Naive thymus-derived CD4-positive, alpha-beta T cell (primary cell): ENCODE measurements at regions of chr6 and their contacts with region 1.

Region 1: DNA sequence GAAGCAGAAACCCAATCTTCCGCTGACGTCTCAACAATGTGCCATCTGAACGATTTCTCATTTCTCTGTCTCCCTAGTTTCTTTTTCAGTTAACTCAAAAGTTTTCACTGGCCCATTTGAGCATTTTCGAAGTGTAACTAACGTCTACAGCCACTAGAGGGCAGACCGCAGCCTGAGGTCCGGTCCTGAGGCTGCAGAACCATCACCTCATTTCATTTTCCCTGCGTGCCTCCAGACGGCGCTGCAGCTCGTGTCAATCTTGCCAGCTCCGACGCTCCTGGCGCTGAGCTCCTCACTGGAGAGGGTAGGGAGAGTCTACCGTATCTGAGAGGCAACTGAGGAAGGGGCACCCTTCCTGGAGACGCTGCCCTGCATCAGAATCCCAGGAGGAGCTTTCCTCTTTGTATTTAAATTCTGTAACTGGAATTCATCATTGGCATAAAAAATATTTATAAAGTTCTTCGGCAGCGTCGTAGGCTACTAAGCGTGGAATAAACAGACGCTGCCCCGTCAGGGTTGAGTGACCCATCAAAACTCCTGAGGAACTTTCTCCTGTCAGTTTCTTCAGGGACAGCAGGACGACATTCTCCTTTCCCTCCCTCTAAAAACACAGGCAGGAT is 28.5 kb upstream of the DTNBP1 start:
- DNase-seq: peak; percentile 56 to 84 (median 76)
- ATAC-seq: peak; percentile 100
- H3K4me3 ChIP-seq: no peak overlapping the region
- H3K4me3 Mint-ChIP-seq: peak overlapping the region in 2 of 10 donors; percentile 25 to 56
- H3K27ac ChIP-seq: no peak overlapping the region
- H3K27ac Mint-ChIP-seq: peak overlapping the region in 3 of 9 donors; percentile 1 to 23 (median 4)
- H3K4me1 ChIP-seq: no peaks in the 10 kb centered on the region
- H3K4me1 Mint-ChIP-seq: peaks cover 4 to 9% (median 7%) of the 10 kb centered on the region in 7 donors
- H3K27me3 ChIP-seq: no peaks in the 10 kb centered on the region
- H3K27me3 Mint-ChIP-seq: peaks cover 0 to 5% (median 0%) of the 10 kb centered on the region in 5 donors

Region 2: DNA sequence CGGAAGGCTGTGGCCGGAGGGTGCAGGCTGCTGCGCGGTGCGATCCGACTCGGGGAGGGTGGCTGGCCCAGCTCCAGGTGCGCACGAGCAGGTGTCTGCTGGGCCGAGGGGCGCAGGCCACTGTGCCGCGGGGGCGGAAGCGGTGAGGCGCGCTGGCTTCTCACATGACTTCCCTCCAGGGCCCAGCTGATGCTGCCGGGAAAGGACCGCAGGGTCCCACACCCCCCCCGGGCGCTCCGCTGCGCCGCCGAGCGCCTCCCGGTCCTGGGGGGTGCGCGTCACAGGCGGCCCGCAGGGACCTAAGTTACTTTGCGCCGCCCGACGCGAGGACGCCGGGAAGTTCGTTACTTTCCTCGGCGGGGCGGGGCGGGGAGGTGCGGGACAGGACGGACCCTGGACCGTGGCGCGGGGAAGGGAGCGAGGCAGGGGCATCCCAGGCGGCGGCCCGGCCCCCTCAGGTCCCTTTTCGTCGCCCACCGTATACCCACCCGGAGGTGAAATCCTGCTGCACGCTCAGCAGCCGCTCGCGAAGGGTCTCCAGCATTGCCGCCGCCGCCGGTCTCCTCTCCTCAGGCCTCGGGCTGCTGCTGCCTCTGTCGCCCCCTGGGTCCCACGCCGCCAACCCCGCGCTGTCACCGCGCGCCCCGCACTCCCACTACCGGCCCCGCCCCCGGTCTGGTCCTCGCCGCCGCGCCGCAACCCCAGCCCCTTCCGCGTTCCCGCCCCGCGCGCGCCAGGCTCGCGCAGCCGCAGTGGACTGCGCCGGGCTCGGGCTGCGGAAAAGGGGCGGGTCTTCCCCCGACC is 28.8 kb before region 1 on chr6 and contains the start of gene DTNBP1:
- CTCF ChIA-PET with region 1: interaction called, 3 read pairs
- POLR2A ChIA-PET with region 1: no interaction called
- intact Hi-C with region 1: loop called (anchors 1 to 2 kb)
- DNase-seq: peak; percentile 74 to 93 (median 84)
- ATAC-seq: peak; percentile 90
- H3K4me3 ChIP-seq: peak within 1 kb of the TSS; percentile 82
- H3K4me3 Mint-ChIP-seq: peak within 1 kb of the TSS; percentile 75 to 93 (median 88)
- H3K27ac ChIP-seq: peak within 1 kb of the TSS; percentile 71
- H3K27ac Mint-ChIP-seq: peak within 1 kb of the TSS; percentile 71 to 90 (median 82)
- H3K4me1 ChIP-seq: peaks cover 11 to 20% of the 10 kb centered on the region in 2 donors
- H3K4me1 Mint-ChIP-seq: peaks cover 20 to 47% (median 39%) of the 10 kb centered on the region in 7 donors
- H3K27me3 ChIP-seq: no peaks in the 10 kb centered on the region
- H3K27me3 Mint-ChIP-seq: peaks cover 0 to 20% (median 4%) of the 10 kb centered on the region in 5 donors
- total RNA-seq, gene DTNBP1: 19.8 to 30.8 (median 25.3) TPM

Region 3: GRCh38 chr6:15901141-15902115 is 210.1 kb after region 1 on chr6:
- CTCF ChIA-PET with region 1: no interaction called
- POLR2A ChIA-PET with region 1: no interaction called
- intact Hi-C with region 1: loop called in 1 of 2 experiments (anchors 5 kb)
- DNase-seq: peak in 1 of 9 donors; percentile 34
- ATAC-seq: peak; percentile 80
- H3K4me3 ChIP-seq: no peak overlapping the region
- H3K4me3 Mint-ChIP-seq: peak overlapping the region in 1 of 10 donors; percentile 70
- H3K27ac ChIP-seq: no peak overlapping the region
- H3K27ac Mint-ChIP-seq: peak overlapping the region in 1 of 9 donors; percentile 92
- H3K4me1 ChIP-seq: no peaks in the 10 kb centered on the region
- H3K4me1 Mint-ChIP-seq: peaks cover 0 to 35% (median 0%) of the 10 kb centered on the region in 7 donors
- H3K27me3 ChIP-seq: no peaks in the 10 kb centered on the region
- H3K27me3 Mint-ChIP-seq: peaks cover 0 to 7% (median 0%) of the 10 kb centered on the region in 5 donors

Region 4: GRCh38 chr6:16206595-16207037 is 515.3 kb after region 1 on chr6:
- CTCF ChIA-PET with region 1: interaction called, 31 read pairs
- POLR2A ChIA-PET with region 1: no interaction called
- intact Hi-C with region 1: loop called (anchors 1 kb)
- DNase-seq: peak in 7 of 9 donors; percentile 19 to 63 (median 54)
- ATAC-seq: peak; percentile 86
- H3K4me3 ChIP-seq: no peak overlapping the region
- H3K4me3 Mint-ChIP-seq: no peak overlapping the region
- H3K27ac ChIP-seq: no peak overlapping the region
- H3K27ac Mint-ChIP-seq: peak overlapping the region in 1 of 9 donors; percentile 48
- H3K4me1 ChIP-seq: no peaks in the 10 kb centered on the region
- H3K4me1 Mint-ChIP-seq: peaks cover 0 to 6% (median 0%) of the 10 kb centered on the region in 7 donors
- H3K27me3 ChIP-seq: no peaks in the 10 kb centered on the region
- H3K27me3 Mint-ChIP-seq: peaks cover 5 to 25% (median 19%) of the 10 kb centered on the region in 5 donors